ENCODE measurements at regions of chr1 and their contacts with region 1.

Region 1: GRCh38 chr1:24705260-24706073 is 39.8 kb upstream of the CLIC4 start:
- DNase-seq: peak; percentile 85 to 93
- H3K4me3 ChIP-seq: peak overlapping the region; percentile 34; the same call in 1 of the 2 replicates
- H3K27ac ChIP-seq: peak overlapping the region; percentile 36
- H3K4me1 ChIP-seq: peaks cover 9% of the 10 kb centered on the region
- H3K27me3 ChIP-seq: no peaks in the 10 kb centered on the region
- CTCF ChIP-seq: no peak

Region 2: GRCh38 chr1:24724345-24725208 is 19.1 kb after region 1 on chr1:
- CTCF ChIA-PET with region 1: no interaction called
- POLR2A ChIA-PET with region 1: interaction called, 4 read pairs
- intact Hi-C with region 1: loop called (anchors 2 kb)
- DNase-seq: peak; percentile 86 to 87
- H3K4me3 ChIP-seq: peak overlapping the region; percentile 63; the same call in 1 of the 2 replicates
- H3K27ac ChIP-seq: peak overlapping the region; percentile 87
- H3K4me1 ChIP-seq: peaks cover 22% of the 10 kb centered on the region
- H3K27me3 ChIP-seq: no peaks in the 10 kb centered on the region
- CTCF ChIP-seq: no peak

Measured in PC-9 (cell line).